ENCODE measurements at regions of chr17 and their contacts with region 1.

Region 1: GRCh38 chr17:5078106-5079028 is at the start of gene ZFP3:
- DNase-seq: peak; percentile 91
- H3K4me3 ChIP-seq: peak within 1 kb of the TSS; percentile 72 to 92 (median 85)
- H3K27ac ChIP-seq: peak within 1 kb of the TSS; percentile 80 to 86 (median 85)
- H3K4me1 ChIP-seq: peaks cover 0 to 22% (median 14%) of the 10 kb centered on the region in 4 donors
- H3K27me3 ChIP-seq: no peaks in the 10 kb centered on the region
- CTCF ChIP-seq: peak in 1 of 4 experiments; percentile 16
- EP300 ChIP-seq: no peak
- POLR2A ChIP-seq: peak; percentile 45 to 47
- total RNA-seq, gene ZFP3: 4.3 to 6.1 (median 5.3) TPM

Region 2: GRCh38 chr17:5097101-5097834 is 18.9 kb after region 1 on chr17:
- intact Hi-C with region 1: loop called (anchors 2 kb)
- DNase-seq: peak; percentile 82
- H3K4me3 ChIP-seq: peak overlapping the region; percentile 42 to 57 (median 52)
- H3K27ac ChIP-seq: peak overlapping the region; percentile 54 to 71 (median 66)
- H3K4me1 ChIP-seq: peaks cover 0 to 15% (median 9%) of the 10 kb centered on the region in 4 donors
- H3K27me3 ChIP-seq: no peaks in the 10 kb centered on the region
- CTCF ChIP-seq: no peak
- EP300 ChIP-seq: no peak
- POLR2A ChIP-seq: peak in 1 of 2 donors; percentile 2

Region 3: GRCh38 chr17:5111402-5112204 is 33.2 kb after region 1 on chr17 and contains the start of gene ZNF232:
- intact Hi-C with region 1: loop called (anchors 5 kb)
- DNase-seq: peak; percentile 96
- H3K4me3 ChIP-seq: peak within 1 kb of the TSS; percentile 76 to 95 (median 81)
- H3K27ac ChIP-seq: peak within 1 kb of the TSS; percentile 81 to 85 (median 82)
- H3K4me1 ChIP-seq: peaks cover 0 to 21% (median 13%) of the 10 kb centered on the region in 4 donors
- H3K27me3 ChIP-seq: peaks cover 6 to 27% (median 8%) of the 10 kb centered on the region in 3 donors
- CTCF ChIP-seq: no peak
- EP300 ChIP-seq: no peak
- POLR2A ChIP-seq: peak; percentile 32 to 42
- total RNA-seq, gene ZNF232: 5.7 to 15.3 (median 12.7) TPM

Region 4: DNA sequence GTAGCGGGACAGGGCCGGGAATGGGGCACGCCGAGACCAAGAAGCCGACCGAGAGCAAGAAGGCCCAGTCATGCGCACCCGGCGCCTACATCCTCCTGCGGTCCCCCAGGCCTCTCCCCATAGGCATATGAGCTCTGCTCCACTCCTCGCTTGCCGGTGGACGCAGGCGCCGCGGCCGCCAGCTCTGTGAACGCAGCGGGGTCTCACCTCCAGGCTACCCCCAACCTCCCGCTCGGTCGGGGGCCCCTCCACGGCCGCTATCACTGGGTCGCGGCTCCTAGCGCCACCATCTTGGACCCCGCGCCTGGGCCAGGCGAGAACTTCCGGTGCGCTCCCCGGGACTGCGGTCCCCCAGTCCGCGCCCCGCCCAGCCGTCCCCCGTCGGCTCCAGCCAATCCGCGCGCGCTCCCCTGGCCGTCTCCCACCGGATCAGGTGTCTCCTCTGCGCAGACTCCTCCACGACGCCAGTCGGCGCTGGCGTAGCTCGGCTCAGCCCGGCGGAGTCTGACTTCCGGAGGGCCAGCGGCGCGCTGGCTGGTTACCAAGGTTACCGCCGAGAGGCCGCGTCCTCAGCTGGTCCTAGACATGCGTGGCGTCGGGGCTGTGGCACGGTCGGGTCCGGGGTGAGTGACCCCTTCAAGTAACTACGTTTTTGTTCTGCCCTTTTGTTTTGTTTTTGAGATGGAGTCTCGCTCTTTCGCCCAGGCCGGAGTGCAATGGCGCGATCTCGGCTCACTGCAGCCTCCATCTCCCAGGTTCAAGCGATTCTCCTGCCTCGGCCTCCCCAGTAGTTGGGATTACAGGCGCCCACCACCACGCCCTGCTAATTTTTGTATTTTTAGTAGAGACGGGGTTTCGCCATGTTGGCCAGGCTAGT is 113.4 kb after region 1 on chr17 and contains the start of gene ZNF594:
- intact Hi-C with region 1: loop called (anchors 5 kb)
- DNase-seq: peak; percentile 98
- H3K4me3 ChIP-seq: peak within 1 kb of the TSS; percentile 80 to 92 (median 86)
- H3K27ac ChIP-seq: peak within 1 kb of the TSS; percentile 78 to 87 (median 83)
- H3K4me1 ChIP-seq: peaks cover 0 to 23% (median 16%) of the 10 kb centered on the region in 4 donors
- H3K27me3 ChIP-seq: no peaks in the 10 kb centered on the region
- CTCF ChIP-seq: peak; percentile 52 to 61 (median 58)
- EP300 ChIP-seq: peak in 1 of 4 donors; percentile 5
- POLR2A ChIP-seq: peak; percentile 36 to 57
- total RNA-seq, gene ZNF594: 15.5 to 24.3 (median 16.9) TPM

Measured in sigmoid colon (tissue), 7 donors.